Activated CD8-positive, alpha-beta T cell treated with anti-CD3 and anti-CD28 coated beads, Interleukin-2, amount 10 ng/mL, durations not matched to agents 7 days and 5 days (primary cell): ENCODE measurements at regions of chr3 and their contacts with region 1.

Region 1: GRCh38 chr3:156151824-156152428 is 31.5 kb downstream of the KCNAB1 start:
- DNase-seq: peak; percentile 61
- ATAC-seq: peak; percentile 69
- H3K4me3 Mint-ChIP-seq: no peak overlapping the region
- H3K27ac Mint-ChIP-seq: no peak overlapping the region
- H3K4me1 Mint-ChIP-seq: peaks cover 4% of the 10 kb centered on the region
- H3K27me3 Mint-ChIP-seq: peaks cover 18% of the 10 kb centered on the region

Region 2: DNA sequence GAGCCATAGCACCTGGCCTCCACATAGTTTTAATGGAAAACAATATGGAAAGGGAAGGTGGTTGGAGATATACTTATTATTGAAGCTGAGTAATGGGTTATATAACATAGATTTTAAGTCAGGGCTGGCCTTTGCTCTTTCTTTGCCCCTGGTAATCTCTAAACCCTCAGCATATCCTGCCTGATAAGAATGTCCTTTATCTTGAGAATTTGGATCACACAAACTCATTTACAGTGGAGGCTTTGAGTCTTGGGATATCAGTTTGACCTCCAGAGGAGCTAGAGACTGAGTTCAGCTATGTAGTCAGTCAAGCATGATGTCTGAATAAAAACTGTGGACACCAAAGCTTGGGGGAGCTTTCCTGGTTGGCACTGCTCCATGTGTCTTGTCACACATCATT is 336.9 kb before region 1 on chr3:
- CTCF ChIA-PET with region 1: no interaction called
- POLR2A ChIA-PET with region 1: no interaction called
- DNase-seq: no peak
- ATAC-seq: no peak
- H3K4me3 Mint-ChIP-seq: no peak overlapping the region
- H3K27ac Mint-ChIP-seq: no peak overlapping the region
- H3K4me1 Mint-ChIP-seq: no peaks in the 10 kb centered on the region
- H3K27me3 Mint-ChIP-seq: peaks cover 3% of the 10 kb centered on the region

Region 3: GRCh38 chr3:156307704-156308103 is 155.8 kb after region 1 on chr3:
- CTCF ChIA-PET with region 1: no interaction called
- POLR2A ChIA-PET with region 1: no interaction called
- DNase-seq: no peak
- ATAC-seq: no peak
- H3K4me3 Mint-ChIP-seq: no peak overlapping the region
- H3K27ac Mint-ChIP-seq: no peak overlapping the region
- H3K4me1 Mint-ChIP-seq: no peaks in the 10 kb centered on the region
- H3K27me3 Mint-ChIP-seq: peaks cover 8% of the 10 kb centered on the region

Region 4: DNA sequence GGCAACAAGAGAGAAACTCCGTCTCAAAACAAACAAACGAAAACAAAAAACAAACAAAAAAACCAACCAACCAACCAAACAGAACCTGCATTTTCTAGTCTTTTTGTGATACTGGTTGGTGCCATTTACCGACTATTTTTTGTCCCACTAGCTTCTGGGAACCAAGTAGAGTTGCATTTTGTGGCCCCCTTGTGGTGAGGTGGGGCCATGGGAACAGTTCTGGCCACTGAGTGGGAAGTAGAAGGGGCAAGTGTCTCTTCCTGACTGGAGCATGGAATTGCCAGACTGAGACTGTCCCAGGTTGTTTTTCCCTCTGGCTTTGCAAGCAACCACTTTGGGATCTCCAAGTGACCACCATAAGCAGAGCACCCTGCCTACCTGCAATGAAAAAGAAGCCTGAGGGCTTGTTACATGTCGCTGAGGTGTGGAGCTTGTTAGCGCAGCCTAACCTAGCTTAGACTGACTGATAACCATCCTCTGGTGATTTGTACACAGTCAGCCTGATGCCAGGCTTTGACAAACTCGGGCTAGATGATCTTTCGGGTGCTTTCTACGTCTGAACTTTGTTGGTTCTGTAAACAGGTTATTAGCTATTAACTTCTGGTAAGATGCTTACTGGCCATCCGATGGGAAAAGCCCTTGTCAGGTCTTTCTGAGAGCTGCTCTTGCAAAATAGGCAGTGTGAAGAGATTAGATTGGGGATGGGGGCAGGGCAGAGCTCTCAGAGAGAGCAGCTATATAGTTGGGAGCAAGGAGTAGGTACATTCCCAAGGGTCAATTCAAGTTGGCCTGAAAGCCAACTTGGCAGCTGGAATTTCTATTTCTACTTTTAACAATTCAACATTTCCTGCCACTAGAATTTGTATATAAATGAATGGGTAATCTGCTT is 230.8 kb after region 1 on chr3:
- CTCF ChIA-PET with region 1: interaction called, 61 read pairs
- POLR2A ChIA-PET with region 1: no interaction called
- DNase-seq: peak; percentile 29
- ATAC-seq: no peak
- H3K4me3 Mint-ChIP-seq: no peak overlapping the region
- H3K27ac Mint-ChIP-seq: no peak overlapping the region
- H3K4me1 Mint-ChIP-seq: no peaks in the 10 kb centered on the region
- H3K27me3 Mint-ChIP-seq: peaks cover 17% of the 10 kb centered on the region

Region 5: DNA sequence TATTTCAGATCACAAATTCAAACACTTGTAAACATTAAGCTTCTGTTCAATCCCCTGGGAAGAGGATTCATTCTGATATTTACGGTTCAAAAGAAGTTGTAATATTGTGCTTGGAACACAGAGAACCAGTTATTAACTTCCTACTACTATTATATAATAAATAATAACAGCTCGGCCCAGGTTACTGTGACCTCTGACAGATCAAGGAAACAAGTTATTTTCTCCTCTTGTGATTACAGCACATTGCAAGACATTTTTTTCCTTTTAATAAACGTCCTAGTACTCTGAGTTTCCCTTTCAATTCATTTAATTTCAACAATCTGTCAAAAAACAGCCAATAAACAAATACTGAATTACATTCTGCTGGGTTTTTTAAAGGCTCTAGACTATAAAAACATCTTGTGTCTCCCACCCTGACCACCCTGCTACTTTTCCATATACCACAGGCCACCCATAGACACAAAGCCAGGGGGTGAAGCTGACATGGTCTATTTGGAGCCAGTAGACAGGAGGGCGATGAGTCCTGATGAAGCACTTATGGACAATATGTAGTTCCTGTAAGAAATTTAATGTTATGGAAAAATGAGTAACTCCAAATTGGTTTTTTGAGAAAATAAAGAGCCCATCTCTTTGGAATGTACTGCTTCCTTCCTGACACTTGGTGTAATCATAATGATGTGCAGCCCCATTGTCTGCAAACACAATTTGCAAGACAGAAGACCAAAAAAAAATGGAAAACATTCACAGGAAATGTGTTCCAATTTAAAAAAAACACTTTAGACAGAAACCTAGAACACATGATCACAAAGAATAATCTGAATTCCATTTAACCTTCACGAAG is 391.0 kb after region 1 on chr3:
- CTCF ChIA-PET with region 1: interaction called, 12 read pairs
- POLR2A ChIA-PET with region 1: no interaction called
- DNase-seq: no peak
- ATAC-seq: no peak
- H3K4me3 Mint-ChIP-seq: no peak overlapping the region
- H3K27ac Mint-ChIP-seq: peak overlapping the region; percentile 3
- H3K4me1 Mint-ChIP-seq: peaks cover 21% of the 10 kb centered on the region
- H3K27me3 Mint-ChIP-seq: no peaks in the 10 kb centered on the region